ENCODE measurements at regions of chr11 and their contacts with region 1.

Region 1: GRCh38 chr11:1837171-1838076 is 1.4 kb upstream of the TNNI2 start:
- DNase-seq: peak; percentile 64 to 88 (median 70)
- ATAC-seq: peak; percentile 18 to 53 (median 42)
- H3K4me3 ChIP-seq: no peak overlapping the region
- H3K27ac ChIP-seq: peak overlapping the region in 1 of 12 donors; percentile 31
- H3K4me1 ChIP-seq: peaks cover 0 to 37% (median 12%) of the 10 kb centered on the region in 12 donors
- H3K27me3 ChIP-seq: no peaks in the 10 kb centered on the region
- CTCF ChIP-seq: peak; percentile 88 to 96 (median 92)
- POLR2A ChIP-seq: no peak

Region 2: GRCh38 chr11:1652771-1653540 is 184.5 kb before region 1 on chr11:
- intact Hi-C with region 1: loop called (anchors 1 to 5 kb)
- DNase-seq: peak; percentile 67 to 89 (median 72)
- ATAC-seq: peak; percentile 59 to 89 (median 80)
- H3K4me3 ChIP-seq: no peak overlapping the region
- H3K27ac ChIP-seq: no peak overlapping the region
- H3K4me1 ChIP-seq: peaks cover 0 to 8% (median 0%) of the 10 kb centered on the region in 12 donors
- H3K27me3 ChIP-seq: peaks cover 0 to 27% (median 0%) of the 10 kb centered on the region in 9 donors
- CTCF ChIP-seq: peak; percentile 95 to 99 (median 97)
- POLR2A ChIP-seq: no peak

Region 3: GRCh38 chr11:1882519-1883238 is 45.3 kb after region 1 on chr11:
- intact Hi-C with region 1: loop called in 7 of 10 experiments (anchors 2 to 5 kb)
- DNase-seq: peak; percentile 87 to 94 (median 88)
- ATAC-seq: peak; percentile 75 to 83 (median 78)
- H3K4me3 ChIP-seq: peak overlapping the region in 1 of 12 donors; percentile 13
- H3K27ac ChIP-seq: peak overlapping the region; percentile 85 to 99 (median 96)
- H3K4me1 ChIP-seq: peaks cover 19 to 53% (median 44%) of the 10 kb centered on the region in 12 donors
- H3K27me3 ChIP-seq: no peaks in the 10 kb centered on the region
- CTCF ChIP-seq: peak; percentile 87 to 98 (median 93)
- POLR2A ChIP-seq: no peak

Region 4: GRCh38 chr11:1889224-1890120 is 52.0 kb after region 1 on chr11:
- intact Hi-C with region 1: loop called in 5 of 10 experiments (anchors 5 kb)
- DNase-seq: peak in 3 of 5 donors; percentile 30 to 84 (median 41)
- ATAC-seq: peak in 2 of 4 donors; percentile 7 to 25
- H3K4me3 ChIP-seq: peak overlapping the region in 1 of 12 donors; percentile 16
- H3K27ac ChIP-seq: peak overlapping the region in 1 of 12 donors; percentile 71
- H3K4me1 ChIP-seq: peaks cover 0 to 32% (median 0%) of the 10 kb centered on the region in 12 donors
- H3K27me3 ChIP-seq: no peaks in the 10 kb centered on the region
- CTCF ChIP-seq: no peak
- POLR2A ChIP-seq: no peak

Region 5: DNA sequence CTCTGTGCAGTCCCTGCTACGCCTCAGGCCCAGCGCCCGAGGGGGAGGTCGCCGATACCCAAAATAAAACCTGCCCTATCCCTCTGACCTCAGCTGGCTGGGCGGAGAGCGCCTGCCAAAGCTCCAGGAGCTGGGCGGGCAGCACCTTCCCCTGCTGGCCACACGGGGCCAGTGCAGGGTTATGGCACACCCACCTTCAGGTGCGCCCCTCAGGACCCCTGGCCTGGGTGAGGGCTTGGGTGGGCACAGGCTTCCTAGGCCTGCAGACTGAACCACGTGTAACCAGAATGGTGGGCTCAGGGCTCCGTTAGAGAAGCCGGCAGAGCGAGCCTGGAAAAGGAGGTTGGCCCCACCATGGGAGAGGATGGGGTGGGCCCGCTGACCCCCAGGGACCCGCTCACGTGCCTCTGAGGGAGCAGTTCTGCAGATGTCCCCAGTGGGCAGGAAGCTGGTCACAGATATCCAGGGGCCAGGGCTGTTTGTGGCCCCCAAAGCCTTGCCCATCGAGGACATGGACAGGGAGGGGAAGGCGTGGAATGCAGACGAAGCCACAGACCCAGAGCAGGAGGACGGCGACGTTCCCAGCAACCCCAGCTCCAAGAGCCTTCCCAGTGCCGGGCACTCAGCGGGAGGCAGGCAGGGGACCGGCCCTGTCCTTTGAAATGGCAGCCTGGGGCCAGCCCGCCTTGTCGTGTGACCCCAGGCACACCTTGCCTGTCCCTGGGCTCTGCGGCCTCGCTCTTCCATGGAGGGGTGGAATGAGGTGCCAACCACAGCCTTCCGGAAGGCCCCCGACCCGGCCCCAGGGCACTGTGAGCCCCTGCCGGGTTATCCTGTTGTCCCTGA is 80.5 kb after region 1 on chr11:
- intact Hi-C with region 1: loop called in 4 of 10 experiments (anchors 2 to 10 kb)
- DNase-seq: peak in 4 of 5 donors; percentile 66 to 84 (median 77)
- ATAC-seq: peak; percentile 45 to 67 (median 59)
- H3K4me3 ChIP-seq: peak overlapping the region in 8 of 12 donors; percentile 7 to 40 (median 26)
- H3K27ac ChIP-seq: peak overlapping the region in 11 of 12 donors; percentile 38 to 93 (median 85)
- H3K4me1 ChIP-seq: peaks cover 12 to 66% (median 47%) of the 10 kb centered on the region in 12 donors
- H3K27me3 ChIP-seq: no peaks in the 10 kb centered on the region
- CTCF ChIP-seq: peak; percentile 51 to 78 (median 64)
- POLR2A ChIP-seq: no peak

Region 6: GRCh38 chr11:2151500-2152257 is 314.3 kb after region 1 on chr11:
- intact Hi-C with region 1: loop called (anchors 1 to 5 kb)
- DNase-seq: peak in 4 of 5 donors; percentile 67 to 78 (median 72)
- ATAC-seq: peak; percentile 30 to 64 (median 44)
- H3K4me3 ChIP-seq: no peak overlapping the region
- H3K27ac ChIP-seq: no peak overlapping the region
- H3K4me1 ChIP-seq: peaks cover 0 to 10% (median 5%) of the 10 kb centered on the region in 12 donors
- H3K27me3 ChIP-seq: peaks cover 7 to 44% (median 24%) of the 10 kb centered on the region in 9 donors
- CTCF ChIP-seq: peak; percentile 61 to 83 (median 73)
- POLR2A ChIP-seq: no peak